ENCODE measurements at regions of chr5 and their contacts with region 1.

Region 1: DNA sequence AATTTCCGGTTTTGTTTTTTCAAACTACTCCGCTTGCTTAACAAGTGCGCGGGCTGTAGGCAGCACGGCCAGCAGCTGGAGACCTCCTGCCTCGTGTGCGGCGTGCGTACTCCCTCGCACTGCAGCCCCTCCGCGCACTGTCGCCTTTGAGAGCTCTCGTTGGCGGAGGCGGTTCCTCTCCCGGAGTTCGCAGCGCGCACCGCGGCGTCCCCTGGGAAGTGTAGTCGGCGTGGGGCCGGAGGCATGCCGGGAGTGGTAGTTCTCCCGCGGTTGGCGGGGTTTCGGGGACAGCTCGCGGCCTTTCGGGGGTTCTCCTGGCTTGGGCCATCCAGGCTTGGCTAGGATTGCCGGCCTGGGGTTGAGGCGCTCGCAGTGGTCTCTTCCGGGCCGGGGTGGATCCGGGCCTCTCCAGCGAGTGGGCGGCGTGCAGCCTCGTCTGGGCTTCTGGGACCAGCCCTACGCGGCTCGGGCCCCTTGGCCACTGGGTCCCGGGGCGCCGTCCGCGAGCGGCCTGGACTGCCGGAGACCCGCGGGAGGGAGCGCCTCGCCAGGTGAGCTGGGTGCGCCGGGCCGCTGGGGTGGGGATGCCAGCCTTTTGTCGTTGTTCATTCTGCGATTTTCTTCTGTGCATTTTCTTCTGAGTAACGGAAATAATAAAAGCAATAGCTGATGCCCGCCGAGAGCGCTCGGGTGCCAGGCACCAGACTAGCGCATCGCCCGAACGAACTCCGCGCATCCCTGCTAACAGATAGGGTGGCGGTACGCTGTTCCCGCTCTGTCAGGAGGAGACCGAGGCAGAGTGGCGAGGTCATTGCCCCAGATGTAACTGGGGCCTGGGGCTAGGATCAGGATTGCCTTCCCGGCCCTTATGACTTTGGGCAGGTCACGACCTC is at the start of gene ZNF354C:
- DNase-seq: peak; percentile 93
- H3K4me3 ChIP-seq: peak within 1 kb of the TSS; percentile 55 to 95 (median 88)
- H3K27ac ChIP-seq: peak within 1 kb of the TSS; percentile 78 to 86 (median 84)
- H3K4me1 ChIP-seq: peaks cover 0 to 12% (median 12%) of the 10 kb centered on the region in 4 donors
- H3K27me3 ChIP-seq: no peaks in the 10 kb centered on the region
- CTCF ChIP-seq: no peak
- EP300 ChIP-seq: no peak
- POLR2A ChIP-seq: peak in 1 of 2 donors; percentile 14
- total RNA-seq, gene ZNF354C: 7.7 to 12.1 (median 10.1) TPM

Region 2: DNA sequence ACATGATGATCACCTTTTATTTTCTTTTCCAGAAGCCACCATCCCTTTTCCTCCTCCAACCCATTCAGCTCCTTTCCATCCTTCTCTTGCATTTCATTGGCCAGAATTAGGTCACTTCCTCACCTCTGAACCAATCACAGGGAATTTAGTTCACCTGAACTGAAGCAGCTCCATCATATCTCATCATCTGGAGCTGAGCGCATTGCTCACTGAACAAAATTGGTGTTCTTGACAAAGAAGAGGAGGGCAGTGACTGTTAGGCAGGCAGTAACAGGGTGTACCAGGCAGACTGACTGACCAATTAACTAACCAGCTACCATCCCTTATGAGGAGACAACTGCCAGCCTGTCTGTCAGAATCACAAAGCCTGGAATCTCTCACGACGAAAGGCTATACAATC is 328.1 kb before region 1 on chr5:
- intact Hi-C with region 1: loop called (anchors 1 kb)
- DNase-seq: no peak
- H3K4me3 ChIP-seq: no peak overlapping the region
- H3K27ac ChIP-seq: no peak overlapping the region
- H3K4me1 ChIP-seq: peaks cover 0 to 12% (median 7%) of the 10 kb centered on the region in 4 donors
- H3K27me3 ChIP-seq: no peaks in the 10 kb centered on the region
- CTCF ChIP-seq: no peak
- EP300 ChIP-seq: no peak
- POLR2A ChIP-seq: no peak

Region 3: DNA sequence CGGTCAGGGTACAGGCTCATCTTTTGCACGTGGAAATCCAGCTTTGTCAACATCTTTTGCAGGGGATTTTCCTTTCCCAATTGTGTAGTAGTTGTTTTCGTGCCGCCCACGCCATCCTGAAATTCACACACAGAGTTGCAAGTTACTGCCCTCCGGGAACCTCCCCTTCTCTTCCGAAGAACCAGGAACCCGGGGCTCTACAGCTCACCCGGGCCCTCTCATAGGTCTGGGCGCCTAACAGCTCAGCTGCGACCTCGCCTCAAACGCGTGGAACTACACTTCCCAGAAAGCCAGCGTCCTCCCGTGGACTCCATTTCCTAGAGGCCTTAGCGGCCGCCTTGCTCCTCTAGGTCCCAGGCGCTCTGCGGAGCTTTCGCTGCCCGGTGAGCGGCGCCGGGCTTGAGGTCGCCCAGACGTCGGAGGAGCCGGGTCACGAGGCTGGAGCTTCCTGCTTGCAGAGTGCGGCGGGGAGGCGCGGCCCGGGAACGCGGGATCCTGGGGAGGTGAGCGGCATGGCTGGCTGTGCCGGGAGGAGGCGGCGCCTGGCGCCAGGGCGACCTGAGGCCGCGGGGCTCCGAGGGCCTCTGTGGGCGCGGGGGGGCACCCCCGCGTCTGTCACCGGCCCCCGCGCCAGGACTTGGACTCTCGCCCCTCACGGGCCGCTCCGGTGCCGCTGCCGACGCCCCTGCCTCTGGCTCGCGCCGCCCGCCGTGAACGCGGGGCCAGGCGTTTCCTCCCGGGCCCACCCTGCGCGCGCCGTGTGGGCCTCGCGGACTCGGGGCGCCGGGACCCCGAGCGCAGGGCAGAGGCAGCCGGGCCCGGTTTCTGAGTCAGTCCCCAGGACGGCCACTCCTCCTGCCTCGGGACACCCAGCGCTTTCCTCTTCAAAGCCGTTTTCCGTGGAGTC is 200.5 kb before region 1 on chr5 and contains the start of gene ZNF354B:
- intact Hi-C with region 1: loop called (anchors 2 kb)
- DNase-seq: peak; percentile 94
- H3K4me3 ChIP-seq: peak within 1 kb of the TSS; percentile 63 to 98 (median 78)
- H3K27ac ChIP-seq: peak within 1 kb of the TSS; percentile 86 to 92 (median 87)
- H3K4me1 ChIP-seq: peaks cover 0 to 21% (median 14%) of the 10 kb centered on the region in 4 donors
- H3K27me3 ChIP-seq: no peaks in the 10 kb centered on the region
- CTCF ChIP-seq: no peak
- EP300 ChIP-seq: no peak
- POLR2A ChIP-seq: peak; percentile 34 to 42
- total RNA-seq, gene ZNF354B: 13.3 to 23.5 (median 18.6) TPM

Region 4: GRCh38 chr5:179023528-179024430 is 36.6 kb before region 1 on chr5 and contains the start of gene ZNF879:
- intact Hi-C with region 1: loop called (anchors 1 kb)
- DNase-seq: peak; percentile 97
- H3K4me3 ChIP-seq: peak within 1 kb of the TSS; percentile 43 to 97 (median 86)
- H3K27ac ChIP-seq: peak within 1 kb of the TSS; percentile 84 to 89 (median 88)
- H3K4me1 ChIP-seq: peaks cover 0 to 11% (median 8%) of the 10 kb centered on the region in 4 donors
- H3K27me3 ChIP-seq: no peaks in the 10 kb centered on the region
- CTCF ChIP-seq: no peak
- EP300 ChIP-seq: no peak
- POLR2A ChIP-seq: no peak
- total RNA-seq, gene ZNF879: 2.8 to 6.3 (median 4.7) TPM

Measured in sigmoid colon (tissue), 7 donors.